CD4-positive, alpha-beta T cell (primary cell): ENCODE measurements at regions of chr5 and their contacts with region 1.

Region 1: GRCh38 chr5:139430015-139430414 is 9.3 kb downstream of the DNAJC18 start:
- DNase-seq: no peak
- ATAC-seq: peak; percentile 87
- H3K4me3 ChIP-seq: no peak overlapping the region
- H3K4me3 Mint-ChIP-seq: no peak overlapping the region
- H3K27ac ChIP-seq: peak overlapping the region in 1 of 2 donors; percentile 41
- H3K27ac Mint-ChIP-seq: peak overlapping the region; percentile 70
- H3K4me1 ChIP-seq: peaks cover 4% of the 10 kb centered on the region
- H3K4me1 Mint-ChIP-seq: peaks cover 16% of the 10 kb centered on the region
- H3K27me3 ChIP-seq: no peaks in the 10 kb centered on the region
- H3K27me3 Mint-ChIP-seq: no peaks in the 10 kb centered on the region
- CTCF ChIP-seq: no peak

Region 2: DNA sequence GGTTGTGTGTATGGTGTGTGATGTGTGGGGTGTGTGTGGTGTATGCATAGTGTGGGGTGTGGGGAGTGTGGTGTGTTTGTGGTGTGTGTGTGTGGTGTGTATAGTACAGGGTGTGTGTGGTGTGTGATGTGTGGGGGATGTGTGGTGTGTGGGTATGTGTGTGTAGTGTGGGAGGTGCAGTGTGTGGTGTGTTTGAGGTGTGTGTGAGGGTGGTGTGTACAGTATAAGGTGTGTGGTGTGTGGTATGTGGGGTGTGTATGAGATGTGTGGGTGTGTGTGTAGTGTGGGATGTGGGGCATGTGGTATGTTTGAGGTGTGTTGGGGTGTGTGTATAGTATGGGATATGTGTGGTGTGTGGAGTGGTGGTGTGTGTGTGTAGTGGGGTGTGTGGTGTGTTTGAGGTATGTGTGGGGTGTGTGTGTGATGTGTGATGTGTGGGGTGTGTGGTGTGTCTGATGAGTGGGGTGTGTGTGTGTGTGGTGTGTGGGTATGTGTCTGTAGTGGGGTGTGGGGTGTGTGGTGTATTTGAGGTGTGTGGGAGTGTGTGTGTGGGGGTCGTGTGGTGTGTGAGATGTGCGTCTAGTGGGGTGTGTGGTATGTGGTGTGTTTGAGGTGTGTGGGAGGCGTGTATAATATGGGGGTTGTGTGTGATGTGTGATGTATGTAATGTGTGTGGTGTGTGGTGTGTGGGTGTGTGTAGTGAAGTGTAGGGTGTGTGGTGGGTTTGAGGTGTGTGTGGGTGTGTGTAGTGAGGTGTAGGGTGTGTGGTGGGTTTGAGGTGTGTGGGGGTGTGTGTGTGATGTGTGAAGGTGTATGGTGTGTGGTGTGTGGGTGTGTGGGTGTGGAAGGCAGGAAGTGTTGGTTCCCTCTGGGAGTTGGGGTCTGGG is 23.9 kb after region 1 on chr5:
- CTCF ChIA-PET with region 1: no interaction called
- POLR2A ChIA-PET with region 1: no interaction called
- intact Hi-C with region 1: no loop called
- DNase-seq: peak in 4 of 14 experiments; percentile 25 to 61 (median 44)
- ATAC-seq: no peak
- H3K4me3 ChIP-seq: no peak overlapping the region
- H3K4me3 Mint-ChIP-seq: no peak overlapping the region
- H3K27ac ChIP-seq: peak overlapping the region in 1 of 2 donors; percentile 1
- H3K27ac Mint-ChIP-seq: peak overlapping the region; percentile 89
- H3K4me1 ChIP-seq: peaks cover 61% of the 10 kb centered on the region
- H3K4me1 Mint-ChIP-seq: peaks cover 51% of the 10 kb centered on the region
- H3K27me3 ChIP-seq: no peaks in the 10 kb centered on the region
- H3K27me3 Mint-ChIP-seq: no peaks in the 10 kb centered on the region
- CTCF ChIP-seq: no peak

Region 3: DNA sequence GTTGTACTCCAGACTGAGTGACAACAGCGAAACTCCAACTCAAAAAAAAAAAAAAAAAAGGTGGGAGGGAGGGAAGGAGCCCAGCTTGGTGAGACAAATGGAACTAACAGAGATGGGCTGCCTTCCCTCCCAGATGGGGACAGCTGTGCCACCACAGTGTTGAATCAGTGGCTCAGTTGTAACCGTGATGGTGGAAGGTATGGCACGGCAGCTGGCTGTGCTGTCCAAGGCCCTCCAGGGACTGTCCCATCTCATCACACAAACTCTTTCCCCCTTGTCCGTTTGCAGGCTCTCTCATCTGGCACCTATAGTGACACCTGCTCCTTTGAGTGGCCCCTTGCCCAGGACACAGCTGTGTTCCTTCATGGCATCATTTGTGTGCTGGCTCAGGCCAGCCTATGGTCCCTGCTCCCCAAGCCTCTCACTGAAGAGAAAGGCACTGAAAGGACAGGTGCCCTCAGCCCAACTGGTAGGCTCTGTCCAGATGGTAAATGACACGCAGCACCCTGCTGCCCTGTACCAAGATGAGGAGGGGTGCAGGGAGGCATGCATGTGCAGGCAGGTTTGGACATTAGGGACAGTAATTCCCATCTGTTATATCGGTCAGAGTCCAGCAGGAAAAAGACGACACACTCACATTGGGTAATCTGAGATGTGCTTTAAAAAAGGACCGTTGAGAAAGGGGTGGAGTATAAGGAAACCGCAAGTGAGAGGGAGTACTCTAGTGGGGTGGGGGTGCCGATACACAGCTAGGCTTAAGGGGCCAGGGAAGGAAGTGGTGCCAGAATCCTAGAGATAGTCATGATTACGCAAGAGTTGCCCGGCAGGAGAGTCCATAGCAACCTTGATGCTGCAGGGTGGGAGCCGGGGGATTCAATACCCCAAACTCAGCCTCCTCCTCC is 45.1 kb after region 1 on chr5:
- CTCF ChIA-PET with region 1: no interaction called
- POLR2A ChIA-PET with region 1: interaction called, 74 read pairs
- intact Hi-C with region 1: loop called (anchors 1 to 5 kb)
- DNase-seq: peak in 5 of 14 experiments; percentile 24 to 75 (median 55)
- ATAC-seq: peak; percentile 65
- H3K4me3 ChIP-seq: peak overlapping the region; percentile 7
- H3K4me3 Mint-ChIP-seq: peak overlapping the region; percentile 81
- H3K27ac ChIP-seq: peak overlapping the region in 1 of 2 donors; percentile 32
- H3K27ac Mint-ChIP-seq: peak overlapping the region; percentile 92
- H3K4me1 ChIP-seq: peaks cover 98% of the 10 kb centered on the region
- H3K4me1 Mint-ChIP-seq: peaks cover 82% of the 10 kb centered on the region
- H3K27me3 ChIP-seq: no peaks in the 10 kb centered on the region
- H3K27me3 Mint-ChIP-seq: no peaks in the 10 kb centered on the region
- CTCF ChIP-seq: no peak